Cardiac septum (tissue), 1 donor: ENCODE measurements at regions of chr3 and their contacts with region 1.

Region 1: DNA sequence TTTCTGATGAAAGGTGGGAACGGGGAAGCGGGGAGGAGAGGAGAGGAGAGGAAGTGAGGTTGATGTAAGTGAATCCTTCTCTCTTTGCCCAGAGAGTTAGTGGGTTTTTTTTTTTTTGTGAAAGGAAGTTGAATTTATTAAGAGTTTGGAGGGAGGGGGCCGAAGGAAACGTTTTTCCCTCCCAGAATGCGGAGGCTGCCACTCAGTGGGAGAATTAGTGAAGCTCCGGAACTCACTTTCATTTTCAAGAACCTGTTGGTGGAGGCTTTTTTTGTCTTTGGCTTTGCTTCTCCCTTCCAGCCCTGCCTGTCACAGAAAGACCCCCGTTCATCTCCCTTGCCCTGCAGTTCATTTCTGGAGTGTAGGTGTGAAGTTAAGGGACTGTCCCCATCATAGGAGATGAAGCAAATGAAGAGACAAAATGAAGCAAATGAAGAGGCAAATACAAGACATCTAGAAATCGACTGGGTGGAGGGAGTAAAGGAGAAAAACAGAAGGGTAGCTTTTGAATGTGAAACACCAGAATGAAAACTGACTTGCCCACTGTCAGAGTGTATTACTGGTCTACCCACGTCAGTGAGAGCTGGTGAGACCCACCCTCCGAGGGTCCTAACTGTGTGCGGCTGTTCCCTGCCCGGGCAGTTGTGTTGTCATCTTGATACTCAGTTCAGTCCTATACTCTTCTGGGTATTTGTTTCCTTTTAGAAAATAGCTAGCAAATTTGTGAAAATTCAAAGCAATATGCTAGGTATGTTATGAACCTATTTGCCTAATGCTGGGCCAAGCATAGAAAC is 91.5 kb downstream of the ITPR1 start:
- DNase-seq: no peak

Region 2: DNA sequence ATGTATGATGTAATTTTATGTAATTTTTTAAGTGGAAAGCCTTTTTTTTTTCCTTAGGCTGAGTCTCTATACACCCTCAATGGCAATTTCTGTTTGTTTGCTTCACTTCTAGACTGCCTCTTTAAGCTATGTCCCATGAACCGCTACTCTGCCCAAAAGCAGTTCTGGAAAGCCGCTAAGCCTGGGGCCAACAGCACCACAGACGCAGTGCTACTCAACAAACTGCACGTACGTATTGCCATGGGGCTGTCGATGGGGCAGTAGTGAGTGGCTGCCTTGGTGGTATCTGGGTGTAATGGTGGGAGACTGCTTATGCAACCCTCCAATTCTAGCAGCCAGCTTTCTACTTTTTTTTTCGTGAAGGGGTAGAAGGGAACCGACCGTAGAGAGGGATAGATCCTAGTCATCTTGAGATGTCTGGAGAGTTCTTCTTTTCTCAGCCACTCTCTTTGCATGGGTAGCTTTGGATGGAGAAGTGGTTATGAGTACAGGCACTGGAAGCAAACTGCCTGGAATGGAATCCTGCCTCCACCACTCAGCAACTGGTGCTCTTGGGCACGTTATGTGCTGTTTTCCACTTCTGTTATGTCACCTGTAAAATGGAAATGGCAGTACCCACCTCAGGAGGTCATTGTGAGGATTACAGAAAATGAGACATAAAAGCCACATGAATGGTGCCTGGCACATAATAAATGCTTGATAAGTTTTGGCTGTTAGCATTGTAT is 43.2 kb after region 1 on chr3:
- intact Hi-C with region 1: loop called (anchors 2 kb)
- DNase-seq: no peak